SK-N-SH (cell line): ENCODE measurements at regions of chr10 and their contacts with region 1.

Region 1: GRCh38 chr10:115129752-115130151 is 36.6 kb downstream of the ATRNL1 start:
- DNase-seq: peak; percentile 13
- H3K4me3 ChIP-seq: no peak overlapping the region
- H3K27ac ChIP-seq: no peak overlapping the region
- H3K4me1 ChIP-seq: no peaks in the 10 kb centered on the region
- H3K27me3 ChIP-seq: no peaks in the 10 kb centered on the region
- CTCF ChIP-seq: peak; percentile 64
- EP300 ChIP-seq: no peak
- RAD21 ChIP-seq: peak; percentile 71

Region 2: GRCh38 chr10:114821293-114821914 is 308.3 kb before region 1 on chr10 and contains the start of gene FHIP2A:
- CTCF ChIA-PET with region 1: interaction called, 10 read pairs
- POLR2A ChIA-PET with region 1: no interaction called
- DNase-seq: peak; percentile 96
- H3K4me3 ChIP-seq: peak within 1 kb of the TSS; percentile 71 to 87
- H3K27ac ChIP-seq: peak within 1 kb of the TSS; percentile 88 to 99
- H3K4me1 ChIP-seq: peaks cover 0 to 13% of the 10 kb centered on the region in 2 experiments
- H3K27me3 ChIP-seq: no peaks in the 10 kb centered on the region
- CTCF ChIP-seq: peak; percentile 39
- EP300 ChIP-seq: no peak
- RAD21 ChIP-seq: no peak; the same call in none of the 2 replicates
- polyA plus RNA-seq, gene FHIP2A: 6.1 and 9.1 TPM in 2 replicates

Region 3: GRCh38 chr10:114869520-114869892 is 260.2 kb before region 1 on chr10:
- CTCF ChIA-PET with region 1: interaction called, 235 read pairs
- POLR2A ChIA-PET with region 1: no interaction called
- DNase-seq: no peak
- H3K4me3 ChIP-seq: no peak overlapping the region; a peak in 1 of 4 replicates
- H3K27ac ChIP-seq: peak overlapping the region; percentile 67 to 94
- H3K4me1 ChIP-seq: peaks cover 0 to 5% of the 10 kb centered on the region in 2 experiments; a peak in 2 of 4 replicates
- H3K27me3 ChIP-seq: no peaks in the 10 kb centered on the region
- CTCF ChIP-seq: no peak
- EP300 ChIP-seq: peak; percentile 6 to 72; a peak in 2 of 4 replicates
- RAD21 ChIP-seq: no peak

Region 4: GRCh38 chr10:115059301-115059898 is 70.4 kb before region 1 on chr10:
- CTCF ChIA-PET with region 1: no interaction called
- POLR2A ChIA-PET with region 1: no interaction called
- DNase-seq: no peak
- H3K4me3 ChIP-seq: no peak overlapping the region
- H3K27ac ChIP-seq: no peak overlapping the region
- H3K4me1 ChIP-seq: peaks cover 0 to 3% of the 10 kb centered on the region in 2 experiments; a peak in 2 of 4 replicates
- H3K27me3 ChIP-seq: no peaks in the 10 kb centered on the region
- CTCF ChIP-seq: no peak
- EP300 ChIP-seq: no peak
- RAD21 ChIP-seq: no peak

Region 5: DNA sequence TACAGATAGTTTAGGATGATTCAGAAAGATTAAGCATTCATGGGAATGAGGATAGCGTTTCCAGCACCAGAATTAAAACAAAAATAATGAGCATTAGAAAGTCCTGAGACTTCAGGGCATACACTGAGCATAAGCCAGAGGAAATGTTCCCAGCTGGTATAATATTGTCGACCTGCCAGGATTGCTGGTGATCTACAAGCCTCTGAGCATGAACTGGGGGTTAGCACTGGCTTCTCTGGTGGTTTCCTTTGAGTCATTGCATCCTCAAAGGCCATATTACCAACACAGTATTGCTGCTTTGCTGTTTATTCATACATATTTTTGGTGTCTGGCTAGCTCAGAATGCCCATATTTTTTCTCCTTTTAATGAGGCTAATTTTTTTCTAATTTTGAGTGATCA is 47.2 kb before region 1 on chr10:
- CTCF ChIA-PET with region 1: no interaction called
- POLR2A ChIA-PET with region 1: no interaction called
- DNase-seq: no peak
- H3K4me3 ChIP-seq: no peak overlapping the region
- H3K27ac ChIP-seq: no peak overlapping the region
- H3K4me1 ChIP-seq: peaks cover 0 to 7% of the 10 kb centered on the region in 2 experiments; a peak in 2 of 4 replicates
- H3K27me3 ChIP-seq: no peaks in the 10 kb centered on the region
- CTCF ChIP-seq: no peak
- EP300 ChIP-seq: no peak
- RAD21 ChIP-seq: no peak